ENCODE measurements at regions of chr2 and their contacts with region 1.

Region 1: GRCh38 chr2:153622285-153622684 is 143.7 kb upstream of the RPRM start:
- DNase-seq: no peak
- H3K4me3 ChIP-seq: no peak overlapping the region
- H3K27ac ChIP-seq: no peak overlapping the region
- H3K4me1 ChIP-seq: no peaks in the 10 kb centered on the region
- H3K27me3 ChIP-seq: no peaks in the 10 kb centered on the region
- CTCF ChIP-seq: peak in 2 of 3 experiments; percentile 35 to 61; a peak in 3 of 4 replicates
- EP300 ChIP-seq: no peak
- POLR2A ChIP-seq: no peak
- RAD21 ChIP-seq: peak; percentile 54 to 58

Region 2: GRCh38 chr2:153595939-153596338 is 26.3 kb before region 1 on chr2:
- CTCF ChIA-PET with region 1: interaction called, 18 read pairs
- POLR2A ChIA-PET with region 1: no interaction called
- DNase-seq: no peak
- H3K4me3 ChIP-seq: no peak overlapping the region
- H3K27ac ChIP-seq: no peak overlapping the region
- H3K4me1 ChIP-seq: peaks cover 0 to 3% (median 0%) of the 10 kb centered on the region in 4 experiments; a peak in 2 of 7 replicates
- H3K27me3 ChIP-seq: no peaks in the 10 kb centered on the region
- CTCF ChIP-seq: no peak
- EP300 ChIP-seq: no peak
- POLR2A ChIP-seq: no peak
- RAD21 ChIP-seq: no peak

Region 3: DNA sequence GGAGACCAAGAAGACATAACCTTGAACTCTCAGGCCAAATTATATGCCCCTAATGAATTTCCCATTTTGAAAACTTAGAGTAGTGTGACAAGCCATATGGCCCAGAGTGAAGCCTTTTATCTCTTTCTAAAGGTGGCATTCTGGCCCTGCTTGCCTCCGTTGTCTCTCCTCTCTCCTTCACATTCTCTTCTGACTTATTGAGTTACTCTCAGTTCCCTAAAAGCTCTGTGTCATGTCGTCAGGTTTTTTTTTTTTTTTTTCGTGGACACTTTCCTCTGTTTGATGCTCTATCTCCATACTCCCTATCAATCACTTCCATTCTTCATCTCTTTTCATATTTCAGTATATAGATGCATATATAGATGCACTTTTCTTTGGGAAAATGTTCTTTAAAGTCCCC is 15.7 kb before region 1 on chr2:
- CTCF ChIA-PET with region 1: interaction called, 24 read pairs
- POLR2A ChIA-PET with region 1: no interaction called
- DNase-seq: no peak
- H3K4me3 ChIP-seq: no peak overlapping the region
- H3K27ac ChIP-seq: no peak overlapping the region
- H3K4me1 ChIP-seq: no peaks in the 10 kb centered on the region
- H3K27me3 ChIP-seq: no peaks in the 10 kb centered on the region
- CTCF ChIP-seq: no peak
- EP300 ChIP-seq: no peak
- POLR2A ChIP-seq: no peak
- RAD21 ChIP-seq: no peak

Measured in H1 (cell line).